ENCODE measurements at regions of chr6 and their contacts with region 1.

Region 1: GRCh38 chr6:3742426-3743344 is 8.8 kb downstream of the PXDC1 start:
- DNase-seq: peak; percentile 57 to 90
- H3K4me3 ChIP-seq: no peak overlapping the region
- H3K4me1 ChIP-seq: peaks cover 10% of the 10 kb centered on the region
- H3K27me3 ChIP-seq: no peaks in the 10 kb centered on the region

Region 2: GRCh38 chr6:3312604-3313231 is 430.0 kb before region 1 on chr6:
- in situ Hi-C with region 1: no loop called
- DNase-seq: no peak
- H3K4me3 ChIP-seq: no peak overlapping the region
- H3K4me1 ChIP-seq: no peaks in the 10 kb centered on the region
- H3K27me3 ChIP-seq: no peaks in the 10 kb centered on the region

Region 3: DNA sequence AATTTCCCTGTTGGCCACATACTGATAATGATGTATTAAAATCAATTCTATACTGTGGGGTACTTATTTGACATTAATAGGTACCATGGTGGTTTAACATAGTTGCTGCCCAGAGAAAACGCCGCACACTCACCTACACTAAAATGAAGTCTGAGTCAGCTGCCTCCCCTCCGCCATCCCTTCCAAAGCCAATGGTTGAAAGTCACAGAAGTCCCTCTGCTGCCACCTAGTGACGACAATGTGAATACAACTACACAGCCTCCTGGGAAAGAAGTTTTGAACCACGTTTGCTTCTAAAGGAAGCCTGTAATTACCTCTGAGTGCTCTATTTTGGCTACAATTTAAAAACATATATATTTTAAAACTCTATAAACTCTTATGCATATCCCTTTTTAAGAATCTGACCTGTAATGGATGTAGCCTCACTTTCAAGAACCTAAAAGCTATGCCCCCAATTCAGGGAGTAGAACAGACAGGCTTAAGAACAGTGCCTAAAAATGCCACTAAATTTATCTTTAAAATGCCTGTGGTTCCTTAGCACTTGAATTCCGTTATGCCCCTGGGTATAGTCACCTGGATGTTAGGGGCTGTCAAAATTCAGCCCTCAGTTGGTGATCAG is 413.3 kb after region 1 on chr6:
- in situ Hi-C with region 1: loop called (anchors 10 kb)
- DNase-seq: peak; percentile 66 to 85
- H3K4me3 ChIP-seq: no peak overlapping the region
- H3K4me1 ChIP-seq: peaks cover 11% of the 10 kb centered on the region
- H3K27me3 ChIP-seq: peaks cover 3% of the 10 kb centered on the region

Region 4: GRCh38 chr6:4486568-4487364 is 744.1 kb after region 1 on chr6:
- in situ Hi-C with region 1: no loop called
- DNase-seq: no peak
- H3K4me3 ChIP-seq: no peak overlapping the region
- H3K4me1 ChIP-seq: no peaks in the 10 kb centered on the region
- H3K27me3 ChIP-seq: no peaks in the 10 kb centered on the region